Natural killer cell (primary cell): ENCODE measurements at regions of chr1 and their contacts with region 1.

Region 1: DNA sequence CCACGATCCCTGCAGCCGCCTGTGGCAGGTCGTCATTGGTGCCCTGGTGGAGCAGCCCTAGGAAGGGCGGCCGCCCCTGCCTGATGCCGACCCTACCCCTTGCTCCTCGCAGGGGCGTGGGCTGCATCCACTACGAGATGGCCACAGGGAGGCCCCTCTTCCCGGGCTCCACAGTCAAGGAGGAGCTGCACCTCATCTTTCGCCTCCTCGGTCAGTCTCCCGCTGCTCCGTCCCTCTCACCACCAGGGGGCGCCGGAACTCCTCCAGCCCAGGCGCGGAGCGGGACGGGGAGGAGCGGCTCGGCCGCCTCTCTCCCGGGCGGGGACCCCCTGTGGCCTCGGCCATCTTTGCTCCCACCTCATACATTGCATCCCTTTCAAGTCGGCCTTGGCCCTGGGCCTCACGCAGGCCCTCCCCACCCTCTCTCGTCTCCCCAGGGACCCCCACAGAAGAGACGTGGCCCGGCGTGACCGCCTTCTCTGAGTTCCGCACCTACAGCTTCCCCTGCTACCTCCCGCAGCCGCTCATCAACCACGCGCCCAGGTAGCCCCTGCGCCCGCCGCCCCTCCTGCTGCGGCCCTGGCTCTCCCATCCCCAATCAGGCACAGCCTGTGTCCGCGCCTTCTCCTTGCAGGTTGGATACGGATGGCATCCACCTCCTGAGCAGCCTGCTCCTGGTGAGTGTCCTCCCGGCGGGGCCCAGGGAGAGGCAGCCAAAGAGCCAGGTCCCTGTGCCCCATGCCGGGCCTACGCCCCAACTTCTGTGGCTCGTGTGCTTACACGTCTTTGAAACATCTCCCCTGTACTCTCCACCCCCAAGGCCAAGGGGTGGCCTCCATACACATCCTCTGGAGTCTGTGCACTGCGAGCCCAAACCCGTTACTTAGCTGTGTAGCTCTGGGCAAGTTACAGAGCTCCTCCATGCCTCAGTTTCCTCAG is 24.7 kb downstream of the CDK18 start:
- DNase-seq: peak; percentile 81 to 88
- ATAC-seq: peak; percentile 76 to 91 (median 88)
- H3K4me3 ChIP-seq: no peak overlapping the region
- H3K4me3 Mint-ChIP-seq: peak overlapping the region; percentile 35
- H3K27ac ChIP-seq: no peak overlapping the region
- H3K27ac Mint-ChIP-seq: no peak overlapping the region
- H3K4me1 ChIP-seq: peaks cover 9% of the 10 kb centered on the region
- H3K4me1 Mint-ChIP-seq: peaks cover 0 to 7% of the 10 kb centered on the region in 2 donors
- H3K27me3 ChIP-seq: no peaks in the 10 kb centered on the region
- H3K27me3 Mint-ChIP-seq: peaks cover 0 to 7% of the 10 kb centered on the region in 2 donors
- CTCF ChIP-seq: peak; percentile 95

Region 2: GRCh38 chr1:205273551-205273982 is 255.6 kb before region 1 on chr1:
- intact Hi-C with region 1: loop called (anchors 10 kb)
- DNase-seq: peak; percentile 83 to 92
- ATAC-seq: peak; percentile 91 to 99 (median 98)
- H3K4me3 ChIP-seq: no peak overlapping the region
- H3K4me3 Mint-ChIP-seq: peak overlapping the region; percentile 37
- H3K27ac ChIP-seq: no peak overlapping the region
- H3K27ac Mint-ChIP-seq: no peak overlapping the region
- H3K4me1 ChIP-seq: peaks cover 37% of the 10 kb centered on the region
- H3K4me1 Mint-ChIP-seq: peaks cover 14 to 18% of the 10 kb centered on the region in 2 donors
- H3K27me3 ChIP-seq: no peaks in the 10 kb centered on the region
- H3K27me3 Mint-ChIP-seq: peaks cover 0 to 6% of the 10 kb centered on the region in 2 donors
- CTCF ChIP-seq: peak; percentile 99

Region 3: GRCh38 chr1:205582471-205583291 is 53.5 kb after region 1 on chr1:
- intact Hi-C with region 1: no loop called
- DNase-seq: peak in 1 of 2 donors; percentile 60
- ATAC-seq: peak in 2 of 3 donors; percentile 29 to 55
- H3K4me3 ChIP-seq: no peak overlapping the region
- H3K4me3 Mint-ChIP-seq: no peak overlapping the region
- H3K27ac ChIP-seq: no peak overlapping the region
- H3K27ac Mint-ChIP-seq: no peak overlapping the region
- H3K4me1 ChIP-seq: peaks cover 18% of the 10 kb centered on the region
- H3K4me1 Mint-ChIP-seq: no peaks in the 10 kb centered on the region
- H3K27me3 ChIP-seq: no peaks in the 10 kb centered on the region
- H3K27me3 Mint-ChIP-seq: peaks cover 2 to 7% of the 10 kb centered on the region in 2 donors
- CTCF ChIP-seq: no peak

Region 4: DNA sequence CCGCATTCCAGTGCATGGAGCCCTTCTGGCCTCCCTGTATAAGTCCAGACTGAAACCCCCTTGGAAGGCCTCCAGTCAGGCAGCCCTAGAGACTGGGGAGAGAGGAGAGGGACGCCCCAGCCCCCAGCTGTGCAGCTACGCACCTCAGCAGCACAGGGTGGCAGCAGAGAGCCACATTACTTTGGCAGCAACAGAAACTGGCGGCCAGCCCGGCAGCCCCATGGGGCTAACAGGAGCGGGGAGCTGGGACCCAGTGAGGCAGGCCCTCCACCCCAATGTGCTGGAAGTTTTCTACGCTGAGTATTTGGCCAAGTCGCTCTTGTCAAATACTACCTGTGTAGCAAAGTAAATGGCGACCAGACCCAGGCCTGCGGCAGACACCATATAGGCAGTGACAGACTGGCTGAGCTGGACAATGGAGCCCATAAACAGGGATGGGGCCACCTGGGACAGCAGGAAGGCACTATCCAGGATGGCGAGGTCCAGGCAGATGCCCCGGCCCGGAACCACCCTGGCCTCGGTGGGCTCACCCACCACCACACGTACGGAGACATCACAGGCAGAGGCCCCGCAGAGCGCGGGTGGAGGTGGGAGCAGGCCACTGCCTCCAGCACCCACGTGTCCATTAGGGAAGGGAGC is 129.9 kb after region 1 on chr1:
- intact Hi-C with region 1: loop called (anchors 1 kb)
- DNase-seq: peak; percentile 62 to 84
- ATAC-seq: peak; percentile 86 to 97 (median 92)
- H3K4me3 ChIP-seq: no peak overlapping the region
- H3K4me3 Mint-ChIP-seq: no peak overlapping the region
- H3K27ac ChIP-seq: no peak overlapping the region
- H3K27ac Mint-ChIP-seq: no peak overlapping the region
- H3K4me1 ChIP-seq: no peaks in the 10 kb centered on the region
- H3K4me1 Mint-ChIP-seq: peaks cover 0 to 4% of the 10 kb centered on the region in 2 donors
- H3K27me3 ChIP-seq: no peaks in the 10 kb centered on the region
- H3K27me3 Mint-ChIP-seq: peaks cover 0 to 2% of the 10 kb centered on the region in 2 donors
- CTCF ChIP-seq: peak; percentile 70

Region 5: DNA sequence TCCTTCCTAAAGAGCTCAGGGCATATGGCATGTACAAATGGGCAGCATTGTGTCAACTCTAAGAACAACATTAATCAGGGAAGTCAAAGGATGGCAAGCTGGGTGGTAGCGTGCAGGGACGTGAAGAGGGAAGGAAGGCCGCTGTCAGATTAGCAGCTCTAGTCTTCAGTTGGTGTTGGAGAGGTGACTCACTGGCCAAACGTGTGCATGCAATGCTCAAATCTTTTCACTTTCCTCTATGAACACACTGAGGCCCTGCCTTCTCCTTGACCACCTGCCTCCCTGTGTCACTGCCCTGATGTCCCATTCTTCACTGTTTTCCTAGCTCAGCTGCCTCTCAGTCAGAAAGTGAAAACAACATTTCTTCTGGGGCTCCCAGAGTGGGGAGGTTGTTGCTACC is 1423.0 kb after region 1 on chr1:
- intact Hi-C with region 1: no loop called
- DNase-seq: no peak
- ATAC-seq: no peak
- H3K4me3 ChIP-seq: no peak overlapping the region
- H3K4me3 Mint-ChIP-seq: no peak overlapping the region
- H3K27ac ChIP-seq: no peak overlapping the region
- H3K27ac Mint-ChIP-seq: no peak overlapping the region
- H3K4me1 ChIP-seq: peaks cover 1% of the 10 kb centered on the region
- H3K4me1 Mint-ChIP-seq: peaks cover 10 to 11% of the 10 kb centered on the region in 2 donors
- H3K27me3 ChIP-seq: no peaks in the 10 kb centered on the region
- H3K27me3 Mint-ChIP-seq: no peaks in the 10 kb centered on the region
- CTCF ChIP-seq: no peak